Adrenal gland (tissue), 19 donors: ENCODE measurements at regions of chr2 and their contacts with region 1.

Region 1: GRCh38 chr2:9770308-9771100 is 72.8 kb upstream of the TAF1B start:
- DNase-seq: peak in 2 of 7 donors; percentile 36 to 80
- H3K4me3 ChIP-seq: no peak overlapping the region
- H3K27ac ChIP-seq: no peak overlapping the region
- H3K4me1 ChIP-seq: no peaks in the 10 kb centered on the region
- H3K27me3 ChIP-seq: no peaks in the 10 kb centered on the region
- CTCF ChIP-seq: peak; percentile 17 to 52 (median 26)
- POLR2A ChIP-seq: no peak

Region 2: DNA sequence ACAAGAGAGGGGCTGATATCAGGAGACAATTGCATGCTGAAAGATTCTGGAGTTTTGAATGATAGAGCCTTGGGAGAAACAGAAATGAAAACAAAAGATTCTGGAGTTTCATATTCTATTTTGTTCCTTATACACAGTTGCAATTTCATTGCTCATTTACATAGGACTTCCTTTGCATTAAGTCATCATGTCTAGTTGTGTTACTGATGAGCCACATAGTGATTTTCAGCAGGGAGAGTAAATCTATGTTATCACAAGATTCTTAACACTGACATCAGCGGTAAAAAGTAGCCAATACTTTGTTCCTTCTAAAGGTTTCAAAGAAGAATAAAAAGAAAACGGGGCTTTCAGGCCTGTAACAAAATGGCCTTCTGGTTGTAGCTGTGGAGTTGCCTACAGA is 222.0 kb before region 1 on chr2:
- intact Hi-C with region 1: loop called in 1 of 2 experiments (anchors 10 kb)
- DNase-seq: no peak
- H3K4me3 ChIP-seq: no peak overlapping the region
- H3K27ac ChIP-seq: no peak overlapping the region
- H3K4me1 ChIP-seq: peaks cover 29 to 85% of the 10 kb centered on the region in 2 donors
- H3K27me3 ChIP-seq: no peaks in the 10 kb centered on the region
- CTCF ChIP-seq: no peak
- POLR2A ChIP-seq: no peak

Region 3: DNA sequence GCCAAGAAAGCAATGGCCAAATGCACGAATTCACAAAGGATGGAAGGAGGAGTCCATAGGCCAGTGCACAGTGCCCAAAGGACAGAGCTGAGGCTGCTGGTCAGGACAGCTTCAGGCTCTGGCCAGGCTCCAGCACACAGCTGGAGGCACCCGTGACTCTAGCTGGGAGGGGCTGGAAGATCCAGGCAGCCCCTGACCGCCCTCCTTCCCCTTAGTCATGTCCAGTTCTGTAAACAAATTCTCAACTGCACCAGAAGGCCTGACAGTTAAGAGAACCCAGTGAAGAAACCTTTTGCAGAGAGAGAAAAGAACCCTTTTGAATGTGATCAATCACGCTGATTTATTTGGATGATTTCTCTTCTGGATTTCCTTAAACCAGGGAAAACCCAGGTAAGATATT is 132.0 kb before region 1 on chr2:
- intact Hi-C with region 1: loop called in 1 of 2 experiments (anchors 5 kb)
- DNase-seq: peak; percentile 70 to 94 (median 90)
- H3K4me3 ChIP-seq: no peak overlapping the region
- H3K27ac ChIP-seq: peak overlapping the region in 2 of 5 donors; percentile 59 to 60
- H3K4me1 ChIP-seq: peaks cover 8 to 12% of the 10 kb centered on the region in 2 donors
- H3K27me3 ChIP-seq: no peaks in the 10 kb centered on the region
- CTCF ChIP-seq: no peak
- POLR2A ChIP-seq: peak in 1 of 2 donors; percentile 35

Region 4: DNA sequence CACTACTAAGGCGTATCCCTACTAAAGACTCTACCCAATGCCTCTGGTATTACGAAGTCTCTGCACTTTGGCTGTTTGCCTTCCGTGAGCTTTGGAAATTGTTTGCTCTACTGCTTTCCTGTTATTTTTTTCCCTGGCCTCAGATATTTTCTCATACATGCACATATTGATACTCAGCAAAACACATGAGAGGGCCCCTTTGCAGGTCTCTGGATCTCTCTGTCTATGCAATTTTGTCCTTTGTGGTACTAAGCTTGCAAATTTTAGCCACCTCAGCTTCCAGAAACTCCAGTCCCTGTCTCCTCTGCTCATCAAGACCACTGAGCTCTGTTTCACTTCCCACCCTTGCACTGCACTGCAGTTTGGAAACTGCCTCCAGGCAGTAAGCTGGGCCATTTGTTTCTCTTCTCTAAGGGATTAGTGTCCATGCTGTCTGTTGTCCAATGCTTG is 119.3 kb after region 1 on chr2:
- intact Hi-C with region 1: no loop called
- DNase-seq: no peak
- H3K4me3 ChIP-seq: no peak overlapping the region
- H3K27ac ChIP-seq: no peak overlapping the region
- H3K4me1 ChIP-seq: peaks cover 0 to 7% of the 10 kb centered on the region in 2 donors
- H3K27me3 ChIP-seq: no peaks in the 10 kb centered on the region
- CTCF ChIP-seq: no peak
- POLR2A ChIP-seq: no peak

Region 5: DNA sequence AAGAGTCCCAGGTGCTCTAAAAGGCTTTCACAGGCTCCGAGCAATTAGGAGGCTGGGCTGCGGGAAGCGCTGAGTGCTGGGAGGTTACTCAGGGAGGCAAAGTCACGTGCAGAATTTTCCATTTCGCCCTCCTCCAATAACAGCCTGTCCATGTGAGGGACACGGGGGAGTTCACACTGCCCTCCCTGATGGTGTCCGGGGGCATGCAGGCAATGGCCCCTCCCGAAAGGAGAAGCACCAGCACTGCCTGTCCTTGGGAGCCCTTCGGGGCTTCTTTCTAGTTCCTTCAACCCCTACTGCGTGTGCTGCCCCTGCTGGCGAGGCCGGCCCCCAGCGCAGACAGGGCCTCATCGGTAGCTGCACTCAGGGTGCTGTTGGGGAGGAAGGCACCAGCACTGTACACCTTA is 469.1 kb after region 1 on chr2:
- intact Hi-C with region 1: no loop called
- DNase-seq: no peak
- H3K4me3 ChIP-seq: no peak overlapping the region
- H3K27ac ChIP-seq: no peak overlapping the region
- H3K4me1 ChIP-seq: no peaks in the 10 kb centered on the region
- H3K27me3 ChIP-seq: no peaks in the 10 kb centered on the region
- CTCF ChIP-seq: no peak
- POLR2A ChIP-seq: no peak